ENCODE measurements at regions of chr3 and their contacts with region 1.

Region 1: DNA sequence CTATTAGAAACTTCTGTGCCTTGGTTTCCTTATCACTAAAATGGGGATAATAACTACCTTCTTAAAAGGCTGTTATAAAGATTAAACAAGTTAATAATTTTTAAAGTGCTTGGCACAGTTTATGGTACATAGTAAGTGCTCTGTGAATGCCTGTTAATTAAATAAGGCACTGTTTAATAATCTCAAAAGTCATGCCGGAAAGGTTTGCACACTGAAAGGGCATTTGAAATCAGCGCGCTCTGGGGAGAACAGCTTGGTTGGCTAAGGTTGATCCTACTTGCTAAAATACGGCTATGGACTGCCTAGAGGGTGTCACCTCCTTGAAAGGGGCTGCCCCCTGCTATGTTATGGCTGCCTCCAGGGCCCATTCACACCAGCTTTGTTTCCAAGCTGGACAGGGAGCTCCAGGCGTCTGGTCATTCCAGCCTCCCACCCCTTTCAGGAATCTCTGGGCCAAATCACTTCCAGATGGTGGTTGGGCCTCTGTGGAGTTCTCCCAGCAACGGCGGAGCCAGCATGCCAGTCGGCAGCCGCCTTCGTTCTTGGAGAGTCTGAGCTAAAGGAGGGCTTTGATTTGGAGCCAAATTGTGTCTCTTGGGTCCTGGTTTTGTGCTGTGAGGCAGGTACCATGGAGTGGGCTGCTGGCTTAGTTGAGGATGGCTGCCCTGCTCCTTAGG is 5.9 kb downstream of the FLNB start:
- DNase-seq: no peak
- CTCF ChIP-seq: no peak

Region 2: DNA sequence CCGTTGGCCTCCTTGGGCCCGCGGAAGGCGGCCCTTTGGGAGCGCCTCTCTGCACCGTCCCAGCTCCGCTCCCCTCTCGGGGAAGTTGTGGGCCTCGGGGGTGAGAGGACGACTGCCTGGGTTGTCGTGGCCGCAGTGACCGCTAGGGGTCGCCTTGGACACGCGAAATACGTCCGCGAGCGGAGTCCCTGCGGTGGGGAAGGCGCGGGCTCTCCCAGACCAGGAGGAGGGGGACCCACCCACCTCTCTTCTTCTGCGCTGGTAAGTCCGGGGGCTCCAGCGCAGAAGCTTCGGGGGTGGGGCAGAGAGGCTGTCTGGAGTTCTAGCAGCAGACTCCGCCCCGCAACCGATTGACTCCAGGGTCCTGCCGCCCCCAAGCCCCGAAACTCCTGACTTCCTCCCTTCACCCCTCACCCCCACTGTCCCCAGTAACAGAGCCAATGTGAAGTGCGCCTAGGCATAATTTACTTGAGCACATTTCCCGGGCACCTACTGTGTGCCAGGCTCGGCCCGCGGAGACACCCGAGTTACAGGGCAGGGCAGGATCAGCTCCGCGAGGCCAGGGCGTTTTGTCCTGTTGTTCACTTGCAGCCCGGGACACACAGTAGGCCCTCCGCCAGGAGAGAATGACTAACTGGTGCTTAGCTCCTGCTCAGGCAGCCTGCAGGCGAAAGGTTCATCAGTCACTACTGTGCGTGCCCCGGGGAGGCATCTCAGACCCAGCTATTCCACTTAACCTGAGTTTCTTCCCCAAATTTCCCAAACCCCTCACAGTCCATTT is 163.8 kb after region 1 on chr3:
- in situ Hi-C with region 1: loop called (anchors 10 kb)
- DNase-seq: peak; percentile 90
- CTCF ChIP-seq: peak; percentile 93